Caco-2 (cell line): ENCODE measurements at regions of chr9 and their contacts with region 1.

Region 1: GRCh38 chr9:102867488-102867887 is 127.6 kb upstream of the CYLC2 start:
- DNase-seq: peak; percentile 10 to 54
- H3K4me3 ChIP-seq: no peak overlapping the region
- H3K4me3 Mint-ChIP-seq: no peak overlapping the region
- H3K27ac Mint-ChIP-seq: no peak overlapping the region
- H3K4me1 ChIP-seq: 0 out of 2 replicates have a peak, but pooled peaks cover 3% of the 10 kb centered on the region
- H3K4me1 Mint-ChIP-seq: peaks cover 12% of the 10 kb centered on the region
- H3K27me3 ChIP-seq: no peaks in the 10 kb centered on the region
- H3K27me3 Mint-ChIP-seq: no peaks in the 10 kb centered on the region
- CTCF ChIP-seq: no peak

Region 2: GRCh38 chr9:102631559-102631958 is 235.9 kb before region 1 on chr9:
- CTCF ChIA-PET with region 1: no interaction called
- POLR2A ChIA-PET with region 1: no interaction called
- intact Hi-C with region 1: no loop called
- DNase-seq: peak in 1 of 2 experiments; percentile 14
- H3K4me3 ChIP-seq: no peak overlapping the region
- H3K4me3 Mint-ChIP-seq: no peak overlapping the region
- H3K27ac Mint-ChIP-seq: no peak overlapping the region
- H3K4me1 ChIP-seq: no peaks in the 10 kb centered on the region
- H3K4me1 Mint-ChIP-seq: no peaks in the 10 kb centered on the region
- H3K27me3 ChIP-seq: no peaks in the 10 kb centered on the region
- H3K27me3 Mint-ChIP-seq: no peaks in the 10 kb centered on the region
- CTCF ChIP-seq: peak in 1 of 2 experiments; percentile 11

Region 3: GRCh38 chr9:102841376-102841775 is 26.1 kb before region 1 on chr9:
- CTCF ChIA-PET with region 1: no interaction called
- POLR2A ChIA-PET with region 1: no interaction called
- intact Hi-C with region 1: loop called (anchors 1 kb)
- DNase-seq: peak; percentile 71 to 86
- H3K4me3 ChIP-seq: no peak overlapping the region
- H3K4me3 Mint-ChIP-seq: peak overlapping the region; percentile 64
- H3K27ac Mint-ChIP-seq: peak overlapping the region; percentile 48
- H3K4me1 ChIP-seq: peaks cover 49% of the 10 kb centered on the region
- H3K4me1 Mint-ChIP-seq: peaks cover 28% of the 10 kb centered on the region
- H3K27me3 ChIP-seq: no peaks in the 10 kb centered on the region
- H3K27me3 Mint-ChIP-seq: no peaks in the 10 kb centered on the region
- CTCF ChIP-seq: no peak

Region 4: DNA sequence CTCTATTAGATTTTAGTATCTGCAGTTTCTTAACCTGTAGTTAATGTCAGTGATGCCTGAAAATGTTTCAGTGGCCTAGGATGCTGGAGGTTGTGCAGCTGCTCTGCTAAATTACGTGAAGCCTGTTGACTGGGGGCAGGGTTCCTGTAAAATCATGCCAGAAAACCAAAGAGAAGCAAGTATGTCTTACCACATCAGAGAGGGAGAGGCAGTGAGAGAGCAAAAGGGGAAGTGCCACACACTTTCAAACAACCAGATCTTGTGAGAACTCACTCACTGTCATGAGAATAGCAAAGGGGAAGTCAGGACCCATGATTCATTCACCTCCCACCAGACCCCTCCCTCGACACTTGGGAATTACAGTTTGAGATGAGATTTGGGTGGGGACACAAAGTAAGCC is 43.7 kb after region 1 on chr9:
- CTCF ChIA-PET with region 1: no interaction called
- POLR2A ChIA-PET with region 1: no interaction called
- intact Hi-C with region 1: no loop called
- DNase-seq: no peak
- H3K4me3 ChIP-seq: no peak overlapping the region
- H3K4me3 Mint-ChIP-seq: no peak overlapping the region
- H3K27ac Mint-ChIP-seq: no peak overlapping the region
- H3K4me1 ChIP-seq: no peaks in the 10 kb centered on the region
- H3K4me1 Mint-ChIP-seq: no peaks in the 10 kb centered on the region
- H3K27me3 ChIP-seq: no peaks in the 10 kb centered on the region
- H3K27me3 Mint-ChIP-seq: no peaks in the 10 kb centered on the region
- CTCF ChIP-seq: no peak